ENCODE measurements at regions of chr6 and their contacts with region 1.

Region 1: GRCh38 chr6:89970609-89971337 is 76.5 kb downstream of the GJA10 start:
- DNase-seq: no peak
- ATAC-seq: no peak
- H3K4me3 Mint-ChIP-seq: no peak overlapping the region
- H3K27ac Mint-ChIP-seq: peak overlapping the region; percentile 79
- H3K4me1 Mint-ChIP-seq: peaks cover 54% of the 10 kb centered on the region
- H3K27me3 Mint-ChIP-seq: no peaks in the 10 kb centered on the region

Region 2: GRCh38 chr6:89984926-89985750 is 14.4 kb after region 1 on chr6:
- CTCF ChIA-PET with region 1: interaction called, 7 read pairs
- POLR2A ChIA-PET with region 1: no interaction called
- intact Hi-C with region 1: loop called in 1 of 2 experiments (anchors 2 kb)
- DNase-seq: no peak
- ATAC-seq: no peak
- H3K4me3 Mint-ChIP-seq: no peak overlapping the region
- H3K27ac Mint-ChIP-seq: peak overlapping the region; percentile 68
- H3K4me1 Mint-ChIP-seq: peaks cover 72% of the 10 kb centered on the region
- H3K27me3 Mint-ChIP-seq: no peaks in the 10 kb centered on the region